Motor neuron (in vitro differentiated cells): ENCODE measurements at regions of chr7 and their contacts with region 1.

Region 1: DNA sequence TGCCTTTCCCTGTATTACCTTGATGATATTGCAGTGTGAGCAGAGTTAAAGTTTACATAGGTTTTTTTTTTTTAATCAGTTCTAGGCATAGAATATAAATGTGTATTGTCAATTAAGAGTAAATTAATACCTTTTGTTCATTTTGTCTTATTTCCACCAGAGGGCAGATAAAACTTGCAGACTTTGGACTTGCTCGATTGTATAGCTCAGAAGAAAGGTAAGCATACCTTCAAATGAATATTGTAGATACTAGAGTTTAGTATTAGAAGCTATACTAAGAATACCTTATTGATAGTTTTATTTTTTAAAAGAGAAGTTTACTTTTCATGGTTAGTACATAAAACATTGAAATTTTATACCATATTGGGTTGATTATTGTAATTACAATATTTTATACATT is 86.8 kb downstream of the MPLKIP start:
- ATAC-seq: no peak
- H3K4me3 ChIP-seq: no peak overlapping the region
- H3K27ac ChIP-seq: no peak overlapping the region
- H3K4me1 ChIP-seq: no peaks in the 10 kb centered on the region

Region 2: DNA sequence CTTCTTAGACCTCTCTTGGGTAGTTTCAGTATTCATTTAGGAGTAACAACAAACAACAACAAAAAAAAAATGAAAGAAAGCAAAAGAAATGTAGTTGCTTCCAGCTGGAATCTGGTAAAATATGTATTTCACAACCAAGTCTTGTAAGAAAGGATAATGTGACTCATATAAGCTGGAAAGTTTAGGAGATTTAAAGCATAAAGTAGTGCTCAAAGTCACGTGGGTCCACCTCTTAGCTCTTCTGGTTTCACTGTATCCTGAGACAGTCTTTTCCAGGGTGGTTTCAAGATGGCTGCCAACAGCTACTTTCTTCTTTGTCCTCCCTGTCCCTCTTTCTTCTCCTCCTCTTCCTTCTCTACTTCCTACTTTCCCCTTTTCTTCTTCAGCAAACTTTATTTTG is 167.1 kb before region 1 on chr7:
- in situ Hi-C with region 1: loop called in 1 of 9 experiments (anchors 25 kb)
- ATAC-seq: no peak
- H3K4me3 ChIP-seq: no peak overlapping the region
- H3K27ac ChIP-seq: no peak overlapping the region
- H3K4me1 ChIP-seq: no peaks in the 10 kb centered on the region

Region 3: GRCh38 chr7:40369641-40370277 is 322.1 kb after region 1 on chr7:
- in situ Hi-C with region 1: no loop called
- ATAC-seq: peak in 1 of 8 experiments; percentile 59
- H3K4me3 ChIP-seq: no peak overlapping the region
- H3K27ac ChIP-seq: no peak overlapping the region
- H3K4me1 ChIP-seq: no peaks in the 10 kb centered on the region